ENCODE measurements at regions of chr10 and their contacts with region 1.

Region 1: GRCh38 chr10:17805921-17806577 is 3.1 kb upstream of the MRC1 start:
- DNase-seq: peak in 1 of 4 experiments; percentile 32
- ATAC-seq: peak; percentile 81
- H3K4me3 ChIP-seq: no peak overlapping the region
- H3K27ac ChIP-seq: no peak overlapping the region
- H3K4me1 ChIP-seq: no peaks in the 10 kb centered on the region; a peak in 2 of 5 replicates
- H3K27me3 ChIP-seq: peaks cover 11 to 38% of the 10 kb centered on the region in 2 experiments; a peak in 4 of 5 replicates
- CTCF ChIP-seq: peak; percentile 37 to 50 (median 45); a peak in 4 of 6 replicates
- EP300 ChIP-seq: no peak
- POLR2A ChIP-seq: no peak
- RAD21 ChIP-seq: peak in 1 of 2 experiments; percentile 35; a peak in 2 of 4 replicates

Region 2: DNA sequence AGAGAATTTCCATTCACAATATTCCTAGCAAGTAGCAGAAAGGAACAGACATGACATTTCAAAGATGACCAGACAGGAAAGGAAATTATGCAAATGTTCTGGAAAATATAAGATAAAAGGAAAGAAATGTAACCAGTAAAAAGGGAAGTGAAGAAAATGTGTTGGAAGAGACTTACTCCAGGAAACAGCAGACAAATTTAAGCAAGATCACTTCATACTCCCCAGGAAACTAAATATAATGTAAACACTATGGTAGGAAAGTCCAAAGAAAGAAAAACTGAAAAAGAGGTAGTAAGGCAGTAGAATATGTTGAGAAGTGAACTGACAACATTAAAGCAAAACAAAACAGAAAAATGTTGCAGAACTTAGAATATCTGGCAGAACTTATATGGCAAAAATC is 345.3 kb before region 1 on chr10:
- CTCF ChIA-PET with region 1: no interaction called
- POLR2A ChIA-PET with region 1: no interaction called
- in situ Hi-C with region 1: no loop called
- intact Hi-C with region 1: no loop called
- DNase-seq: no peak
- ATAC-seq: no peak
- H3K4me3 ChIP-seq: no peak overlapping the region
- H3K27ac ChIP-seq: peak overlapping the region; percentile 21; the same call in 1 of the 3 replicates
- H3K4me1 ChIP-seq: peaks cover 11 to 35% of the 10 kb centered on the region in 2 experiments
- H3K27me3 ChIP-seq: no peaks in the 10 kb centered on the region
- CTCF ChIP-seq: no peak
- EP300 ChIP-seq: no peak
- POLR2A ChIP-seq: no peak
- RAD21 ChIP-seq: no peak

Region 3: DNA sequence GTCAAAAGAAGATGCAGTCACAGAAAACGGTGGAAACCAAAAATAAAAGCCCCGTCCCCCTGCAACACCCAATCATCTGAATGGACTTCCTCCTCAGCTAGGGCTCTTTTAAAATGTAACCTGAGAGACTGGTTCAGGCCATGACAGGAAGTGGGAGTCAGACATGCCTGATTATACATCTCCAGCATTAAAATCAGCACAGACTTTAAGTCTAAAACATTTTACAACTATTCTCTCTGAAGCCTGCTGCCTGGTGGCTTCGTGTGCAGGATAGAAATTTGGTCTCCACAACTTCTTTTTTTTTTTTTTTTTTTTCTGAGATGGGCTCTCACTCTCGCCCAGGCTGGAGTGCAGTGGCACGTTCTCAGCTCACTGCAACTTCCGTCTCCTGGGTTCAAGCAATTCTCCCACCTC is 219.2 kb before region 1 on chr10:
- CTCF ChIA-PET with region 1: no interaction called
- POLR2A ChIA-PET with region 1: no interaction called
- in situ Hi-C with region 1: no loop called
- intact Hi-C with region 1: no loop called
- DNase-seq: peak in 1 of 4 experiments; percentile 35
- ATAC-seq: peak; percentile 83
- H3K4me3 ChIP-seq: no peak overlapping the region
- H3K27ac ChIP-seq: no peak overlapping the region
- H3K4me1 ChIP-seq: no peaks in the 10 kb centered on the region; a peak in 1 of 5 replicates
- H3K27me3 ChIP-seq: no peaks in the 10 kb centered on the region
- CTCF ChIP-seq: no peak
- EP300 ChIP-seq: no peak
- POLR2A ChIP-seq: no peak
- RAD21 ChIP-seq: no peak

Region 4: DNA sequence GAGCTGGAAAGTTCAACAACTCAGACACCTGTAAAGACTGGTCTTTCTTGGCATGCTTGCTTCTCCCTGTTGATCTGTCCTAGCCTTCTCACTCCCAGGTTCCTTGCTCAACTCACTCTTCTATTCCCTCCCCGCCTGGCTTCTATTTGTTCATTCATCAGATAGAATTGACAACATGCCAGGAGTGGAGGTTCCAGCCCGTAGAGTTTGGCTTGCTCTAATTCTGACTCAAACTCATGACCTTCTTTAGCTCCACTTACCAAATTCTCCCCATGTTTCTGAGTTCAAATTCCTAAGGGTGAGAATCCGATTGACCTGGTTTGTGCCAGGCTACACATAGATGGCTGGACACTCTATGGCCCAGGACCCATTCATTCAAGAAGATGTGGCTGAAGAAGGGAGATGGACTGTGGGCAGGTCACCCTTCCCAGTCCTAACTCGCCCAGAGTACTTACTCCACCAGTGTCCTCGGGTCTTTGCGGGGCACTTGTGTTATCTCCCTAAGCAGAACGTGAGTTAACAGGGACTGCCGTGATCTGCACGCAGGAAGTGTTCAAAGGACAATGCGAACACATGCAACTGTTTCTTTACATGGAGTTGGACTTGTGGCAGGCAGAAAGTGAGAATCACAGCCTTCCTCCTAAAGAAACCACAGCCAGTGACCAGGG is 58.0 kb before region 1 on chr10:
- CTCF ChIA-PET with region 1: no interaction called
- POLR2A ChIA-PET with region 1: no interaction called
- in situ Hi-C with region 1: no loop called
- intact Hi-C with region 1: loop called (anchors 5 kb)
- DNase-seq: no peak
- ATAC-seq: peak; percentile 54
- H3K4me3 ChIP-seq: no peak overlapping the region
- H3K27ac ChIP-seq: no peak overlapping the region
- H3K4me1 ChIP-seq: no peaks in the 10 kb centered on the region; a peak in 2 of 5 replicates
- H3K27me3 ChIP-seq: no peaks in the 10 kb centered on the region
- CTCF ChIP-seq: no peak
- EP300 ChIP-seq: no peak
- POLR2A ChIP-seq: no peak
- RAD21 ChIP-seq: no peak